ENCODE measurements at regions of chr15 and their contacts with region 1.

Region 1: GRCh38 chr15:99224372-99225214 is 24.8 kb downstream of the TTC23 start:
- DNase-seq: no peak
- H3K4me3 ChIP-seq: no peak overlapping the region
- H3K4me3 Mint-ChIP-seq: no peak overlapping the region
- H3K27ac ChIP-seq: no peak overlapping the region
- H3K27ac Mint-ChIP-seq: no peak overlapping the region
- H3K4me1 ChIP-seq: no peaks in the 10 kb centered on the region
- H3K4me1 Mint-ChIP-seq: no peaks in the 10 kb centered on the region
- H3K27me3 ChIP-seq: peaks cover 3% of the 10 kb centered on the region
- H3K27me3 Mint-ChIP-seq: peaks cover 3% of the 10 kb centered on the region in 2 donors

Region 2: GRCh38 chr15:99213187-99213811 is 11.3 kb before region 1 on chr15:
- CTCF ChIA-PET with region 1: interaction called, 15 read pairs
- POLR2A ChIA-PET with region 1: no interaction called
- intact Hi-C with region 1: no loop called
- DNase-seq: peak; percentile 22 to 61 (median 37)
- H3K4me3 ChIP-seq: no peak overlapping the region
- H3K4me3 Mint-ChIP-seq: no peak overlapping the region
- H3K27ac ChIP-seq: no peak overlapping the region
- H3K27ac Mint-ChIP-seq: no peak overlapping the region
- H3K4me1 ChIP-seq: no peaks in the 10 kb centered on the region
- H3K4me1 Mint-ChIP-seq: no peaks in the 10 kb centered on the region
- H3K27me3 ChIP-seq: no peaks in the 10 kb centered on the region
- H3K27me3 Mint-ChIP-seq: peaks cover 4 to 10% of the 10 kb centered on the region in 2 donors

Measured in CD4-positive, alpha-beta memory T cell (primary cell).